Calu3 (cell line): ENCODE measurements at regions of chr4 and their contacts with region 1.

Region 1: DNA sequence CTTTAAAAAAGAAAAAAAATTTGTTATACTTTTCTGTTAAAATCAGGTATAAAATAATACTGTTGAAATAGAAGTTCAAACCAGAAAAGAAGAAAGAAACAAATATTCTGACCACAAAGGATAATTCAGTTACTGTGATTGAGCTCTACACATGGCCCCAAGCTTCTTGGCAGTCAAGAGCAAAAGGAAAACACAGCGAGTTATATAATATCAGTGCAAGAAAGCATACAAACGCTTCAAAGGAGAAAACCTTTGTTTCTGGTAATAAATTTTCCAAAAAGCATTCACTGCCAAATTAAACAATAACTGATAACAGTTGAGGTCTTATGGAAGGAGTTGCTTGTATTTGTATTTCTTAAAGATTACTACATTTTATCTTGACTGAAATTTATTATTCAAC is 40.5 kb upstream of the EDNRA start:
- DNase-seq: no peak
- H3K4me3 Mint-ChIP-seq: no peak overlapping the region
- H3K27ac Mint-ChIP-seq: no peak overlapping the region
- H3K4me1 Mint-ChIP-seq: no peaks in the 10 kb centered on the region
- H3K27me3 Mint-ChIP-seq: no peaks in the 10 kb centered on the region
- CTCF ChIP-seq: no peak

Region 2: GRCh38 chr4:147658501-147658900 is 218.1 kb after region 1 on chr4:
- CTCF ChIA-PET with region 1: interaction called, 17 read pairs
- intact Hi-C with region 1: no loop called
- DNase-seq: no peak
- H3K4me3 Mint-ChIP-seq: no peak overlapping the region
- H3K27ac Mint-ChIP-seq: no peak overlapping the region
- H3K4me1 Mint-ChIP-seq: no peaks in the 10 kb centered on the region
- H3K27me3 Mint-ChIP-seq: no peaks in the 10 kb centered on the region
- CTCF ChIP-seq: no peak

Region 3: GRCh38 chr4:147723326-147723725 is 282.9 kb after region 1 on chr4:
- CTCF ChIA-PET with region 1: no interaction called
- intact Hi-C with region 1: no loop called
- DNase-seq: no peak
- H3K4me3 Mint-ChIP-seq: no peak overlapping the region
- H3K27ac Mint-ChIP-seq: no peak overlapping the region
- H3K4me1 Mint-ChIP-seq: no peaks in the 10 kb centered on the region
- H3K27me3 Mint-ChIP-seq: no peaks in the 10 kb centered on the region
- CTCF ChIP-seq: no peak